ENCODE measurements at regions of chr20 and their contacts with region 1.

Region 1: DNA sequence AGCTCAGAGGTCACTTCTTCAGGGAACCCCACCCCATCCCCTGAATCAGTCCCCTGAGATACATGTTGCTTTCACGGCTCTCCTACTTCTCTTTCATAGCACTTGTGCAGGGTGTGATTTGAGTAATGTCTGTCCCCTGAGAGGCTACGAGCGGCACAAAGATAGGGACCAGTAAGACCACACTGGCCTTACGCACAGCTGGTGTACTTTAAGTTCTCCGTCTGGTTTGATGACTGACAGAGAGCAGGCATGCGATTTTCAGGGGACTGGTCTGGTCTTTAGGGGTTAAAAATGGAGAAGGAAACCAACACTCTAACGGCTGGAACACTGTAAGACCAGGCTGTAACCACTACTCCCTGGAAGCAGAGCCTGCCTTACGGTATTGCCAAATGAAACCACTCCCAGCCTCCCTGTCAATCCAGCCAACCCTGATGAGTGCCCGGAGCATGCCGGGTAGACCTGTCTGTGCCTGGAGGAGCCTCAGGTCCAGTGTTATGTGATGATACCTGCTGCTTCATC is 47.1 kb downstream of the ELMO2 start:
- DNase-seq: no peak
- H3K27ac ChIP-seq: peak overlapping the region; percentile 18
- CTCF ChIP-seq: no peak

Region 2: DNA sequence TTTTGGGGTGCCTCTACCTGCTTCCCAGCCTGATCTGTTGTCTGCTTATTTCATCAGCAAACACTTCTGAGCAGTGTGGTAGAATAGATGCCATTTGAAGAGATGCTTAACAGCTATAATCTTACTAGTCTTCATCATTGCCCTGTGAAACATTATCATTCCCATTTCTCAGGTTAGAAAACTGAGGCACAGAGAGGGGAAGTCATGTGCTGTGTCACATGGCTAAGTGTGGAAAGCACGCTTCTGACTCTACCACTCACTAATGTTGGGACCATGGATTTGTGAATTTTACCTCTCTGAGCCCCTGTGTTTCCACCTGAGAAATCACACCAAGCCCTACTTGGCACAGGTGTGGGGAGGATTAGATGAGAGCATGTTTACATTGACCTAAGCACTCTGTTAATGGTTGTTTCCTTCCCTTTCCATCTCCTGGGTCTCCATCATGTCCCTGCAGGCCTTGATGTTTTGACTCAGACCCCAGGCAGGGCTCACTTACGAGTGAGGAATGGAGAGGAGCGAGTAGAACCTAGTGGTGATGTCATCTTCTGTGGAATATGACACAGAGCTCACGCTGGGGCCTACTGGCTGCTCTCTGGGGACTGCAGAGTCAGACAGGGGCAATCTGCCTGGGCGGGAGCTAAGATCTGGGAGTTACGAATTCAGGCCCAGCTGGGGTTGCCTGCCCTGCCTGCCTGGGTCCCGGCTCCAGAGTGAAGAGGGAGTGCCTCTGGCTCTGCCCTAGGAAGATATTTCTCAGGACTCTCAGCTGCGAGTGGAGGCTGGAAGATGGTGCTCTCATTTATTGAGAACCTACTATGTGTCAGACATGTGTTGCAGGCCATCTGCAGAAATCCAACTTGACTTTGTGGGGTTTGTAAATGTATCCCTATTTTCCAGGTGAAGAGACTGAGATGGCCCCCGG is 115.3 kb before region 1 on chr20:
- CTCF ChIA-PET with region 1: no interaction called
- POLR2A ChIA-PET with region 1: no interaction called
- DNase-seq: peak; percentile 85
- H3K27ac ChIP-seq: peak overlapping the region; percentile 27
- CTCF ChIP-seq: no peak

Region 3: GRCh38 chr20:46406199-46406985 is 47.1 kb after region 1 on chr20 and contains the start of gene ELMO2:
- CTCF ChIA-PET with region 1: interaction called, 4 read pairs
- POLR2A ChIA-PET with region 1: interaction called, 11 read pairs
- DNase-seq: peak; percentile 100
- H3K27ac ChIP-seq: peak within 1 kb of the TSS; percentile 79
- CTCF ChIP-seq: no peak

Region 4: GRCh38 chr20:46430921-46431712 is 71.8 kb after region 1 on chr20:
- CTCF ChIA-PET with region 1: no interaction called
- POLR2A ChIA-PET with region 1: no interaction called
- DNase-seq: no peak
- H3K27ac ChIP-seq: no peak overlapping the region
- CTCF ChIP-seq: no peak